ENCODE measurements at regions of chr2 and their contacts with region 1.

Region 1: GRCh38 chr2:167191588-167191987 is 303.3 kb downstream of the XIRP2 start:
- DNase-seq: no peak
- H3K4me3 ChIP-seq: no peak overlapping the region
- H3K27ac ChIP-seq: no peak overlapping the region
- H3K4me1 ChIP-seq: peaks cover 7% of the 10 kb centered on the region
- H3K27me3 ChIP-seq: no peaks in the 10 kb centered on the region
- CTCF ChIP-seq: no peak

Region 2: GRCh38 chr2:168033966-168034365 is 842.4 kb after region 1 on chr2:
- CTCF ChIA-PET with region 1: interaction called, 10 read pairs
- POLR2A ChIA-PET with region 1: no interaction called
- intact Hi-C with region 1: no loop called
- DNase-seq: no peak
- H3K4me3 ChIP-seq: no peak overlapping the region
- H3K27ac ChIP-seq: no peak overlapping the region
- H3K4me1 ChIP-seq: no peaks in the 10 kb centered on the region
- H3K27me3 ChIP-seq: no peaks in the 10 kb centered on the region
- CTCF ChIP-seq: no peak